HEK293T (cell line): ENCODE measurements at regions of chr2 and their contacts with region 1.

Region 1: GRCh38 chr2:100381240-100381639 is 36.2 kb downstream of the CHST10 start:
- DNase-seq: peak; percentile 73

Region 2: GRCh38 chr2:100262555-100263320 is 118.5 kb before region 1 on chr2:
- CTCF ChIA-PET with region 1: interaction called, 109 read pairs
- POLR2A ChIA-PET with region 1: interaction called, 8 read pairs
- DNase-seq: peak; percentile 79

Region 3: GRCh38 chr2:100365434-100365833 is 15.8 kb before region 1 on chr2:
- CTCF ChIA-PET with region 1: interaction called, 11 read pairs
- POLR2A ChIA-PET with region 1: no interaction called
- DNase-seq: no peak

Region 4: GRCh38 chr2:100453853-100454252 is 72.6 kb after region 1 on chr2:
- CTCF ChIA-PET with region 1: no interaction called
- POLR2A ChIA-PET with region 1: no interaction called
- DNase-seq: no peak